ENCODE measurements at regions of chr5 and their contacts with region 1.

Region 1: DNA sequence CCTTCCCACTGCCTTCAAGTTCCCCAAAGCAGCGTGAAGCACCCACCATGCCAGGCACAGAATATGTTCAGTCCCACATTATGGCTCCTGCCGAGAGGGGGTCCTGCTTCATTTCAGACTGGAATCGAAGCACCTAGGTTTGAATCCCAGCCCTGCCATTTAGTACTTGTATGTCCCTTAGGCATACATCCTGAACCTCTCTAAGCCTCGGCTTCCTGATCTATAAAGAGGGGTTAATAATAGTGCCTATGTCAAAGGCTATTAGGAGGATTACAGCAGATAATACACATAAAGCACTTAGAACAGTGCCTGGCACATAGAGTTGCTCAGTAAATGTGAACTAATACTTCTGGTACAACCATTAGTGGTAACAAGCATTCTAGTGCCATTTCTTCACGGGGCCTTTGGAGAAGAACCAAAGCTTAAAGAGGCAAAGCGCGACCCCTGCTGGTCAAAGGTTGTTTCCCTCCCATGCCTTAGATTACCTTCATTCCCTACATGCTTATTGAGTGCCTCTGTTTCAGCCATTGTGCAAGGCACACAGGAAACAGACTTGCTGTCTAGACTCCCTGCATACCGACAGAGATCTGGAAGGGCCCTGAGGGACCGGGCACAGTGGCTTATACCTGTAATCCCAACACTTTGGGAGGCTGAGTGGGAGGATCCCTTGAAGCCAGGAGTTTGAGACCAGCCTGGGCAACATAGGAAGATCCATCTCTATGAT is 98.2 kb downstream of the PPARGC1B start:
- DNase-seq: peak; percentile 85
- ATAC-seq: peak; percentile 59
- H3K4me3 ChIP-seq: no peak overlapping the region
- H3K4me3 Mint-ChIP-seq: no peak overlapping the region
- H3K27ac ChIP-seq: no peak overlapping the region
- H3K27ac Mint-ChIP-seq: no peak overlapping the region
- H3K4me1 ChIP-seq: no peaks in the 10 kb centered on the region
- H3K4me1 Mint-ChIP-seq: peaks cover 6% of the 10 kb centered on the region
- H3K27me3 ChIP-seq: no peaks in the 10 kb centered on the region
- H3K27me3 Mint-ChIP-seq: no peaks in the 10 kb centered on the region
- CTCF ChIP-seq: peak; percentile 92

Region 2: GRCh38 chr5:149656576-149657182 is 171.6 kb before region 1 on chr5:
- CTCF ChIA-PET with region 1: interaction called, 204 read pairs
- POLR2A ChIA-PET with region 1: no interaction called
- intact Hi-C with region 1: no loop called
- DNase-seq: peak; percentile 52
- ATAC-seq: peak; percentile 54
- H3K4me3 ChIP-seq: no peak overlapping the region
- H3K4me3 Mint-ChIP-seq: no peak overlapping the region
- H3K27ac ChIP-seq: no peak overlapping the region
- H3K27ac Mint-ChIP-seq: no peak overlapping the region
- H3K4me1 ChIP-seq: no peaks in the 10 kb centered on the region
- H3K4me1 Mint-ChIP-seq: no peaks in the 10 kb centered on the region
- H3K27me3 ChIP-seq: peaks cover 0 to 3% (median 1%) of the 10 kb centered on the region in 4 experiments
- H3K27me3 Mint-ChIP-seq: peaks cover 32% of the 10 kb centered on the region
- CTCF ChIP-seq: peak; percentile 56

Region 3: DNA sequence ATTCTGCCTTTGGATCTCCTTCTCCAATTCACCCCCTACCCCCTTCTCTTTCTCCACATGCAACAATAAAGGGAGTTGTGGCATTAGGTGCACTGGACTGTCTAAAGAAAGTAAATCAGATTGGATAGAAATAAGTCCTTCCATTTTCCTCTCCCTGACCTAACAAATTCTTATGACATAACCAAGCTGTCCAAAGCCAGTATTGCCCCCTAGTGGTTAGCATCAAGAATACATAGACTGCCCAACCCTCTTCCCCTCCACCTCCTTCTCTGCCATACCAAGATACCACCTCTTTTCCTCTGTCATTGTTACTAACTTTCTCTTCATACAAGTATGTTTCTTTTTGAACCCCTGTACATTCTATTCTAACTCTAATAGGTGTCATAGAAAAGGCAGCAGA is 52.5 kb before region 1 on chr5:
- CTCF ChIA-PET with region 1: interaction called, 12 read pairs
- POLR2A ChIA-PET with region 1: no interaction called
- intact Hi-C with region 1: no loop called
- DNase-seq: no peak
- ATAC-seq: no peak
- H3K4me3 ChIP-seq: no peak overlapping the region
- H3K4me3 Mint-ChIP-seq: no peak overlapping the region
- H3K27ac ChIP-seq: no peak overlapping the region
- H3K27ac Mint-ChIP-seq: no peak overlapping the region
- H3K4me1 ChIP-seq: peaks cover 44 to 49% of the 10 kb centered on the region in 2 donors
- H3K4me1 Mint-ChIP-seq: peaks cover 57% of the 10 kb centered on the region
- H3K27me3 ChIP-seq: no peaks in the 10 kb centered on the region
- H3K27me3 Mint-ChIP-seq: no peaks in the 10 kb centered on the region
- CTCF ChIP-seq: peak; percentile 56

Region 4: GRCh38 chr5:149852641-149853330 is 24.5 kb after region 1 on chr5:
- CTCF ChIA-PET with region 1: interaction called, 240 read pairs
- POLR2A ChIA-PET with region 1: no interaction called
- intact Hi-C with region 1: no loop called
- DNase-seq: peak; percentile 55
- ATAC-seq: peak; percentile 39
- H3K4me3 ChIP-seq: no peak overlapping the region
- H3K4me3 Mint-ChIP-seq: no peak overlapping the region
- H3K27ac ChIP-seq: no peak overlapping the region
- H3K27ac Mint-ChIP-seq: no peak overlapping the region
- H3K4me1 ChIP-seq: no peaks in the 10 kb centered on the region
- H3K4me1 Mint-ChIP-seq: no peaks in the 10 kb centered on the region
- H3K27me3 ChIP-seq: no peaks in the 10 kb centered on the region
- H3K27me3 Mint-ChIP-seq: no peaks in the 10 kb centered on the region
- CTCF ChIP-seq: peak; percentile 89

Measured in B cell (primary cell).